BJ (cell line): ENCODE measurements at regions of chr2 and their contacts with region 1.

Region 1: DNA sequence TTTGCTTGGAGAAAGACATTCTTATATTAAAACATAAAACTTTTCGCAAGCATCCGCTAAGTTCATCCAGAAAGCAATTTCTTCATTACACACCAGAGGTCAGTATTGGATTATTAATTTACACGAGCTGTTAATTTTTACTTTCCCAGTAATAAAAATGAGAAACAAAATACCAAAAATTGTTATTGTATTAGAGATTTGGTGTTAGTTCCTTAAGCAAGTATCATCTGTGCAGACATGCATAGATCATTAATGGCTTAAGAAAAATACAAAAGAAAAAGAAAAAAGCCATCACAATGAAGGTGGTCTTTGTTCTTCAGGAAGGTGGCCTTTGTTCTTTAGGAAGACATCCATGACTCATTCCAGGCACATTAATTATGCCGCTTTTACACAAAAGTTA is 53.6 kb upstream of the HNMT start:
- DNase-seq: no peak
- H3K4me3 ChIP-seq: no peak overlapping the region
- H3K27me3 ChIP-seq: no peaks in the 10 kb centered on the region; the same call in 1 of the 2 replicates
- CTCF ChIP-seq: peak; percentile 50

Region 2: GRCh38 chr2:138090330-138090729 is 179.7 kb after region 1 on chr2:
- CTCF ChIA-PET with region 1: interaction called, 17 read pairs
- POLR2A ChIA-PET with region 1: no interaction called
- DNase-seq: no peak
- H3K4me3 ChIP-seq: no peak overlapping the region
- H3K27me3 ChIP-seq: peaks cover 3% of the 10 kb centered on the region
- CTCF ChIP-seq: peak; percentile 76

Region 3: GRCh38 chr2:138110453-138111083 is 199.9 kb after region 1 on chr2:
- CTCF ChIA-PET with region 1: no interaction called
- POLR2A ChIA-PET with region 1: interaction called, 10 read pairs
- DNase-seq: no peak
- H3K4me3 ChIP-seq: no peak overlapping the region
- H3K27me3 ChIP-seq: no peaks in the 10 kb centered on the region
- CTCF ChIP-seq: no peak

Region 4: DNA sequence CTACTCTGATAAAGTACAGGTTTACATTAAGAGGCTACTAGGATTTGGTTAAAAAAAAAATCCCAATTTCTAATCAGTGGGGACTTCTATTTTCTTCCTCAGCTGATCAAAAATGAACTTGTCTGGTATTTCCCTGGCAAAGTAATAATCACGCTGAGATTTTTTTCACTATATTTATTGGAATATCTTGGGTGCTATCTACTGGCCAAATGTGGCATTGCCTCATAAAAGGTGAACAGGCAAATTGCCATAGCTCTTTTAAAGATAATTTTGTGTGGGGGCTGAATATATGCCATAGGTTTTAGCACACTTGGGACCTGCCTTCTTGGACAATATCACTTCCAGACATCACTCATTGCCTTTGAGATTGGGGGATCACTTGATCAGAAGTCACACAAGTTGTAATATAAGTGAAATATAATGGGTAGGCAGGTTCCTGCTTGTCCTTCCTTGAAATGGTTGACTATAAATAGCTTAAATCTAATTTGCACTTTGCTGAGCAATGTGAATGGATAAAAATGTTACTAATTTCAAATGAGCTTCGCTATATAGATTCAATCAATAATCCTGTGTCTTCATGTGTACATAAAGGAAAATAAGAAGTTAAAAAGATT is 876.5 kb after region 1 on chr2:
- CTCF ChIA-PET with region 1: interaction called, 26 read pairs
- POLR2A ChIA-PET with region 1: no interaction called
- DNase-seq: no peak
- H3K4me3 ChIP-seq: no peak overlapping the region
- H3K27me3 ChIP-seq: peaks cover 4% of the 10 kb centered on the region
- CTCF ChIP-seq: peak; percentile 65

Region 5: GRCh38 chr2:138827426-138828054 is 916.9 kb after region 1 on chr2:
- CTCF ChIA-PET with region 1: interaction called, 38 read pairs
- POLR2A ChIA-PET with region 1: no interaction called
- DNase-seq: peak; percentile 2
- H3K4me3 ChIP-seq: no peak overlapping the region
- H3K27me3 ChIP-seq: no peaks in the 10 kb centered on the region
- CTCF ChIP-seq: peak; percentile 69